Activated T-helper 1 cell treated with anti-CD3 and anti-CD28 coated beads, Interleukin-12 subunit alpha, Interleukin-12 subunit beta, Interleukin-2, Interleukin-4 antibody, amounts not matched to agents 30 ng/mL and 10 ng/mL and 1 ng/mL, durations not matched to agents 14 hours and 24 hours and 36 hours (primary cell): ENCODE measurements at regions of chr1 and their contacts with region 1.

Region 1: GRCh38 chr1:228734881-228735801 is at the start of gene RHOU:
- DNase-seq: peak; percentile 65
- H3K4me3 Mint-ChIP-seq: peak within 1 kb of the TSS; percentile 84
- H3K27ac Mint-ChIP-seq: no peak within 1 kb of the TSS
- H3K4me1 Mint-ChIP-seq: peaks cover 27% of the 10 kb centered on the region
- H3K27me3 Mint-ChIP-seq: peaks cover 40% of the 10 kb centered on the region
- total RNA-seq, gene RHOU: 0.49 and 0.69 TPM in 2 replicates

Region 2: DNA sequence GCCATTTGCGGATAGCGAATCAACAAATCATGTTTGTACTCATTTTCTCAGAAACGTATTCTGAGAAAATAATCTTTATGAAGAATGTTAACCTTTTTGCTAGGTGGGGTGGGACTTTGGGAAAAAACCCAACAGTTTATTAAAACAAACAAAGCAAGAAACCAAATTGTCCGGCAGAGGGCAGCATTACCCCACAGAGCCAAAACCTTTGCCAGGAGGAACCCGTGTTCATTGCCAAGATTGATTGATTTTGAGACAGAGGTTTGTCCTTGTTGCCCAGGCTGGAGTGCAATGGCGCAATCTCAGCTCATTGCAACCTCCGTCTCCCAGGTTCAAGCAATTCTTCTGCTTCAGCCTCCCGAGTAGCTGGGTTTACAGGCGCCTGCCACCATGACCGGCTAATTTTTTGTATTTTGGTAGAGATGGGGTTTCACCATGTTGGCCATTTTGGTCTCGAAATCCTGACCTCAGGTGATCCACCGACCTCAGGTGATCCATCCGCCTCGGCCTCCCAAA is 70.7 kb before region 1 on chr1:
- intact Hi-C with region 1: loop called (anchors 1 kb)
- DNase-seq: peak; percentile 55
- H3K4me3 Mint-ChIP-seq: no peak overlapping the region
- H3K27ac Mint-ChIP-seq: no peak overlapping the region
- H3K4me1 Mint-ChIP-seq: no peaks in the 10 kb centered on the region
- H3K27me3 Mint-ChIP-seq: peaks cover 15% of the 10 kb centered on the region

Region 3: DNA sequence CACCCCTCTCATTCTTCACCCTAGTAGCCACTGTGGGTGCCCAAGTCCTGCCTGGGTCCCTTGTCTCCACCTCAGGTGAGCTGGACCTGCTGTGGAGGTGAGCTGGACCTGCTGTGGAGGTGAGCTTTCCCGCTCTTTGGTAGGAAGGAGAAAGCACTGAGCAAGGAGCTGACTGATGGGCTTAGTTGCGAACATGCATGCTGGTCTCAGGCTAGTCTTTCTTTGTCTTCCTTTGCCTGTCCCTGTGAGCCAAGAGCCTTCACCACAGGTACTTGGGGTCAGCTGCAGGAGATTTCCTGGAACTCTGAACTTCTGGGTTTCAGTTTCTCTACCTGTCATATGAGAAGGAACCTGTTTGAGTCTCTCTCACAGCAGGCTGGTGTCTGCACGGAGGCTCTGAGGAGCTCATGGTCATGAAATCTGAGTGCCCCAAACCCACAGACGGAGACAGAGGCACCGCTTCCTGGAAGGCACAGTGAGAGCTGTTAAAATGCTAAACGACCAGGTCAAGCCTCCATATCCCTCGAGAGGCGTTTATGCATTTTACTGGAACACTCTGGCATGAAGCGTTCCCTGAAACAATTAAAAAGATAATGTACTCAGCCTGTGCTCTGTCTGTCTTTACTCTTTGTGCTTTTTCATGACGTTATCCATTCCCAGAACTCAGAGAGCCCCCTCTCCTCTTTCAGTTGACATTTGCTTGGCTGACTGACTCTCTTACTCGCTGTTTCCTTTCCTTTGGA is 69.7 kb after region 1 on chr1:
- intact Hi-C with region 1: loop called (anchors 2 kb)
- DNase-seq: peak; percentile 50
- H3K4me3 Mint-ChIP-seq: peak overlapping the region; percentile 37
- H3K27ac Mint-ChIP-seq: peak overlapping the region; percentile 85
- H3K4me1 Mint-ChIP-seq: peaks cover 73% of the 10 kb centered on the region
- H3K27me3 Mint-ChIP-seq: no peaks in the 10 kb centered on the region

Region 4: GRCh38 chr1:228860911-228861831 is 126.0 kb after region 1 on chr1:
- intact Hi-C with region 1: loop called (anchors 10 kb)
- DNase-seq: no peak
- H3K4me3 Mint-ChIP-seq: no peak overlapping the region
- H3K27ac Mint-ChIP-seq: no peak overlapping the region
- H3K4me1 Mint-ChIP-seq: peaks cover 37% of the 10 kb centered on the region
- H3K27me3 Mint-ChIP-seq: peaks cover 21% of the 10 kb centered on the region

Region 5: GRCh38 chr1:229227298-229227919 is 492.3 kb after region 1 on chr1:
- intact Hi-C with region 1: loop called (anchors 1 kb)
- DNase-seq: peak; percentile 66
- H3K4me3 Mint-ChIP-seq: no peak overlapping the region
- H3K27ac Mint-ChIP-seq: no peak overlapping the region
- H3K4me1 Mint-ChIP-seq: peaks cover 11% of the 10 kb centered on the region
- H3K27me3 Mint-ChIP-seq: peaks cover 15% of the 10 kb centered on the region